ENCODE measurements at regions of chrX and their contacts with region 1.

Region 1: GRCh38 chrX:116667346-116668134 is 204.8 kb upstream of the CT83 start:
- DNase-seq: no peak
- H3K4me3 Mint-ChIP-seq: no peak overlapping the region
- H3K27ac Mint-ChIP-seq: no peak overlapping the region
- H3K4me1 Mint-ChIP-seq: no peaks in the 10 kb centered on the region
- H3K27me3 Mint-ChIP-seq: no peaks in the 10 kb centered on the region
- CTCF ChIP-seq: no peak

Region 2: GRCh38 chrX:116824785-116825184 is 157.2 kb after region 1 on chrX:
- CTCF ChIA-PET with region 1: no interaction called
- POLR2A ChIA-PET with region 1: no interaction called
- intact Hi-C with region 1: no loop called
- DNase-seq: no peak
- H3K4me3 Mint-ChIP-seq: no peak overlapping the region
- H3K27ac Mint-ChIP-seq: no peak overlapping the region
- H3K4me1 Mint-ChIP-seq: no peaks in the 10 kb centered on the region
- H3K27me3 Mint-ChIP-seq: peaks cover 23% of the 10 kb centered on the region
- CTCF ChIP-seq: no peak

Region 3: GRCh38 chrX:116930311-116930710 is 262.8 kb after region 1 on chrX:
- CTCF ChIA-PET with region 1: no interaction called
- POLR2A ChIA-PET with region 1: no interaction called
- intact Hi-C with region 1: no loop called
- DNase-seq: no peak
- H3K4me3 Mint-ChIP-seq: no peak overlapping the region
- H3K27ac Mint-ChIP-seq: no peak overlapping the region
- H3K4me1 Mint-ChIP-seq: no peaks in the 10 kb centered on the region
- H3K27me3 Mint-ChIP-seq: peaks cover 23% of the 10 kb centered on the region
- CTCF ChIP-seq: no peak

Region 4: DNA sequence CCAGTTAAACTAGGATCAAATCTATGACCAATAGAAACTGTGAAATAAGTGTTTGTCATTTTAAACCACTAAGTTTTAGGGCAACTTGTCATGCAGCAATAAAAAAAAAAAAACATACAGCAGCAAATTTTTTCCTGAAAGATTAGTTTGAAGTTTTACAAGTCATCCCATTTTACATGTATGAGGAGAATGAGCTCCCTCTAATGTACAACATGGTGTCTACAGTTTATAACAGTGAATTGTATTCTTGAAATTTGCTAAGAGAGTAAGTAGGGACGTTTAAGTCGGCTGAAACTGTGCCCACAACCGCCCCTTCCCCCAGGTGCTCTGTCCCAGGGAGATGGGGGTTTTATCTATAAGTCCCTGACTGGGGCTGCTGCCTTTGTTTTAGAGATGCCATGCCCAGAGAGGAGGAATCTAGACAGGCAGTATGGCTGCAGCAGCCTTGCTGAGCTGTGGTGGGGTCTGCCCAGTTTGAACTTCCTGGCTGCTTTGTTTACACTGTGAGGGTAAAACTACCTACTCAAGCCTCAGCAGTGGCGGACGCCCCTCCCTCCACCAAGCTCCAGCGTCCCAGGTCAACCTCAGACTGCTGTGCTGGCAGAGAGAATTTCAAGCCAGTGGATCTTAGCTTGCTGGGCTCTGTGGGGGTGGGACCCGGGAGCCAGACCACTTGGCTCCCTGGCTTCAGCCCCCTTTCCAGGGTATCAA is 294.5 kb after region 1 on chrX:
- CTCF ChIA-PET with region 1: no interaction called
- POLR2A ChIA-PET with region 1: no interaction called
- intact Hi-C with region 1: loop called (anchors 1 kb)
- DNase-seq: peak; percentile 16
- H3K4me3 Mint-ChIP-seq: no peak overlapping the region
- H3K27ac Mint-ChIP-seq: no peak overlapping the region
- H3K4me1 Mint-ChIP-seq: no peaks in the 10 kb centered on the region
- H3K27me3 Mint-ChIP-seq: no peaks in the 10 kb centered on the region
- CTCF ChIP-seq: peak; percentile 19